ENCODE measurements at regions of chr9 and their contacts with region 1.

Region 1: GRCh38 chr9:100720922-100721321 is 143.0 kb downstream of the CAVIN4 start:
- DNase-seq: no peak
- H3K4me3 ChIP-seq: no peak overlapping the region
- H3K27ac ChIP-seq: no peak overlapping the region
- H3K27me3 ChIP-seq: no peaks in the 10 kb centered on the region
- CTCF ChIP-seq: no peak

Region 2: DNA sequence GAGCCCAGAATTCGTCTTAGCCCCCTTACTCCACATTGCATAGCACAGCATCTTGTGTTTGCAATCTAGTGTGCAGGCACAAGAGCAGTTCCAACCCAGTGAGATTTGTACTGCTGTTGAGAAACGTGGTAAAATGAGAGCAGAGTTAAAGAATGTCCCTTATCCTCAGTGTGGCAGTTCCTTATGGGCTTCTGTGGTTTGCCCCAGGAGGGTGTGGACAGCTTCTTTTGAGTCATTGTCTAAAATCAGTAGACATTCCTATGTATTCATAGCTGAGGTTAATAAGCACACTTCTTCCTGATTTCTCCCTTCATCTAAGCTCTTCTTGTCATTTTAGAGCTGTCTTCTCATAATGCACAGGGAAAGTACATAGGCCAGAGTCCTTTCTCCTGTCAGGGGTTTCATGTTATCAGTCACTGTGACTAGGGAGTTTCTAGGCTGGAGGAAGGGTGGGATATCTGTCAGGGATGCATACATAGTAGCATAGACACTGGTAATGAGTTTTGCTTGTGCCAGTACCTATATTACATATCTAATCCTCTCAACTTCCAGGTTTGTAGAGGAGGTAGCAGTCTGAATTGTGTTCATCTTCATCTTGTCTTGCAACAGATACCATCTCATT is 145.0 kb before region 1 on chr9:
- intact Hi-C with region 1: no loop called
- DNase-seq: no peak
- H3K4me3 ChIP-seq: no peak overlapping the region
- H3K27ac ChIP-seq: peak overlapping the region in 12 of 59 donors; percentile 1 to 49 (median 20)
- H3K27me3 ChIP-seq: no peaks in the 10 kb centered on the region
- CTCF ChIP-seq: no peak

Region 3: GRCh38 chr9:101093620-101094019 is 372.7 kb after region 1 on chr9:
- intact Hi-C with region 1: loop called in 1 of 2 experiments (anchors 10 kb)
- DNase-seq: no peak
- H3K4me3 ChIP-seq: no peak overlapping the region
- H3K27ac ChIP-seq: no peak overlapping the region
- H3K27me3 ChIP-seq: no peaks in the 10 kb centered on the region
- CTCF ChIP-seq: no peak

Region 4: DNA sequence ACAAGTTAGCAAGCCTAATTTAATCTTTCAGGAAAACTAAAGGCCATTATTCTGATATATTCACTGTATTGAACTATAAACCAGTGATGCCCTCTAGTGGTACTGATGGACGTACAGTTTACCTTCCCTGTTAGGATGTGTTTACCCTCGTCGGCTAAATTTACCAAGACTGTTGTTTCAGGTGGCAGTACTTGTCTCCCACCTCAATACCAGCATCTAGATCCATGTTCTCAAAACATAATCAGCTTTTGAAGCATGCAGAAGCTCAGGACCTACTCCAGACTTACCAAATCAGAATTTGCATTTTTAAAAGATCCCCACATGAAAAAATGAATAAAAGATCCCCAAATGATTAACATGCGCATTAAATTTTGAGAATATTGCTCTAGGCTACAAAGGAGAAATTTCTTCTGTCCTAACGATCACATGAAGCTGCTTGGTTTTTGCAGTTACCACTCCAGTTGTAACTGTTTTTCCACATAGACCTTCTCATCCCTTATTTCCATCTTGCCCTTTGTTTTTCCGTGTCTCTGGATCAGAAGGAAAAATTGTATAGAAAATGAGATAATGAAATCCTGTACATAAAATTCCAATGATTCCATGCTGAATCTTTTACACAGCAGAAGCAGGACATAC is 667.1 kb after region 1 on chr9:
- intact Hi-C with region 1: loop called (anchors 5 to 10 kb)
- DNase-seq: no peak
- H3K4me3 ChIP-seq: peak overlapping the region in 5 of 59 donors; percentile 4 to 33 (median 10)
- H3K27ac ChIP-seq: peak overlapping the region in 56 of 59 donors; percentile 6 to 88 (median 77)
- H3K27me3 ChIP-seq: no peaks in the 10 kb centered on the region
- CTCF ChIP-seq: peak; percentile 22 to 78 (median 66)

Region 5: DNA sequence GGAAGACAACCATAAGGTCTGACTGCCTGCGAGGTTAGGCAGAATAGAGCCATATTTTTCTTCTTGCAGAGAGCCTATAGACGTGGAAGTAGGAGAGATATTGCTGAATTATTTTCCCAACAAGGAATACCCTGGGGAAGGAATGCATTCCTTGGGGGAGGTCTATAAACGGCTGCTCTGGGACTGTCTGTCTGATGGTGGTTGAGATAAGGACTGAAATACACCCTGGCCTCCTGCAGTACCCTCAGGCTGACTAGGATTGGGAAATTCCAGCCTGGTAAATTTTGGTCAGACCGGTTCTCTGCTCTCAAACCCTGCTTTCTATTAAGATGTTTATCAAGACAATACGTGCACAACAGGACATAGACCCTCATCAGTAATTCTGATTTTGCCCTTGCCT is 1635.1 kb after region 1 on chr9:
- intact Hi-C with region 1: no loop called
- DNase-seq: no peak
- H3K4me3 ChIP-seq: no peak overlapping the region
- H3K27ac ChIP-seq: no peak overlapping the region
- H3K27me3 ChIP-seq: no peaks in the 10 kb centered on the region
- CTCF ChIP-seq: no peak

Measured in dorsolateral prefrontal cortex (tissue), 120 donors.